CD4-positive, alpha-beta T cell (primary cell): ENCODE measurements at regions of chr11 and their contacts with region 1.

Region 1: DNA sequence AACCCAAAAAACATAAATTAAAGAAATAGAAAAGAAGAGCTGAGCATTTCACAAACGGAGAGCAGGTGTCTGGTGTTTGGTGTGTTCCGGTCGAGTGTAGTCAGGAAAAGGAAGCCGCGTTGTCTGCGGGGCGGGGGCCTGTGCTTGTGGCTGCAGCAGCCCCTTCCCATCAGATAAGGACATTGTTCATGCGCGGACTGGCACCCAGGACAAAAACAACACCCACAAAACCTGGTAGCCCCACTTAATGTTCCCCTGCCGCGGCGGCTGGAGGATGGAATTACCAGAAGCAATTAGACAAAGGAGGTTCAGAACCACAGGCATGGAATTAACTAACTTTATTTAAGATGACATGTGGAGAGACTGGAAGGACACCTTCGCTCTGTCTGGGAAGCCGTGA is 29.9 kb downstream of the KRTAP5-5 start:
- DNase-seq: peak in 1 of 14 experiments; percentile 23
- ATAC-seq: no peak
- H3K4me3 ChIP-seq: no peak overlapping the region
- H3K4me3 Mint-ChIP-seq: peak overlapping the region; percentile 4
- H3K27ac ChIP-seq: no peak overlapping the region
- H3K27ac Mint-ChIP-seq: no peak overlapping the region
- H3K4me1 ChIP-seq: peaks cover 9% of the 10 kb centered on the region
- H3K4me1 Mint-ChIP-seq: peaks cover 16% of the 10 kb centered on the region
- H3K27me3 ChIP-seq: peaks cover 0 to 8% of the 10 kb centered on the region in 2 experiments
- H3K27me3 Mint-ChIP-seq: peaks cover 18% of the 10 kb centered on the region
- CTCF ChIP-seq: no peak

Region 2: DNA sequence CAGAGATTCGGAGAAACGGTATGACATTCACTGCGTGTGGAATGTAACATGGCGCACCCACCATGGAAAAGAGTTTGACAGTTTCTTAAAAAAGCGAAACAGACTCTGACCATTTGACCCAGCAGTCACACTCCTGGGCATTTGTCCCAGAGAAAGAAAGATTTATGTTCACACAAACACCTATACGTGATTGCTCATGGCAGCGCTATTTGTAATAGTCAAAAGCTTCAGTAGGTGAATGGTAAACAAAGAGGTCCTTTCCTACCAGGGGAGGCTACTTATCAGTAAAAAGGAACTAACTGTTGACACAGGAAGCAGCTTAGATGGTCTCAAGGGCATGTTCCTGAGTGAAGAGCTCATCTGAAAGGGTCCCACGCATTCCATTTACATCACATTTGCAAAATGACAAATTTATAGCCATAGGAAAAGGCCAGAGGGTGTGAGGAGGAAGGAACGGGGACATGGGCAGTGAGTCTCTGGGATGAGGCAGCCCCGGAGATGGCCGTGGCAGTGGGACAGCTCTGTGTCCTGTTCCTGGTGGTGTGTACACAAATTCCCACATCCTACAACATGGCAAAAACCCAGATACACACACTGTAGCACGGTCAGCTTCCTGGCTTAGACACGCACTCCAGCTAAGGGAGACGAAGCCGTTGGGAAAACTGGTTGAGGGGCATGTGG is 22.9 kb after region 1 on chr11:
- CTCF ChIA-PET with region 1: no interaction called
- POLR2A ChIA-PET with region 1: no interaction called
- intact Hi-C with region 1: loop called in 1 of 2 experiments (anchors 2 kb)
- DNase-seq: no peak
- ATAC-seq: no peak
- H3K4me3 ChIP-seq: no peak overlapping the region
- H3K4me3 Mint-ChIP-seq: no peak overlapping the region
- H3K27ac ChIP-seq: no peak overlapping the region
- H3K27ac Mint-ChIP-seq: no peak overlapping the region
- H3K4me1 ChIP-seq: no peaks in the 10 kb centered on the region
- H3K4me1 Mint-ChIP-seq: no peaks in the 10 kb centered on the region
- H3K27me3 ChIP-seq: peaks cover 0 to 5% of the 10 kb centered on the region in 2 experiments
- H3K27me3 Mint-ChIP-seq: peaks cover 18% of the 10 kb centered on the region
- CTCF ChIP-seq: no peak

Region 3: DNA sequence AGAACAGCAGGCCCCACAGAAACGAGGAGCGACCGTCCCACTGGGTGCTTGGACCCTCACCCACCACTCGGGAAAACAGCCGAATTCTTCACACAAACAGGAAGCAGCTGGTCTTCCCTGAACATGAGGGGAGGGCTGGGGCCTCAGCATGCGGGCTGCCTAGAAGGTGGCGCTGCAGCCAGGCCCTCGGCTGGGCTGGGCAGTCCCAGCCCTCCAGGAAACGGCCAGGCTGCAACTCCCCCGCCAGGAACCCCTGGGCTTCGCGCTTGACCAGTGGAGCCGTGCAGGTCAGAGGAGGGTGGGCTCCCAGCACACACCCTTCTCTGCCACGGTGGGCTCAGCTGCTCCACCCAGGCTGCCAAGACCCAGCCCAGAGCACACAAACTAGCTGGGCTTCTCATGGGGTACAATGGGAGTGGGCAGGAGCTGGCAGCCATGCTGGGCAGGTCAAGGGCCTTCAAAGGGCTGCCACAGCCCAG is 450.1 kb after region 1 on chr11:
- CTCF ChIA-PET with region 1: no interaction called
- POLR2A ChIA-PET with region 1: no interaction called
- intact Hi-C with region 1: no loop called
- DNase-seq: no peak
- ATAC-seq: no peak
- H3K4me3 ChIP-seq: no peak overlapping the region
- H3K4me3 Mint-ChIP-seq: no peak overlapping the region
- H3K27ac ChIP-seq: no peak overlapping the region
- H3K27ac Mint-ChIP-seq: no peak overlapping the region
- H3K4me1 ChIP-seq: peaks cover 3% of the 10 kb centered on the region
- H3K4me1 Mint-ChIP-seq: peaks cover 4% of the 10 kb centered on the region
- H3K27me3 ChIP-seq: peaks cover 0 to 5% of the 10 kb centered on the region in 2 experiments
- H3K27me3 Mint-ChIP-seq: no peaks in the 10 kb centered on the region
- CTCF ChIP-seq: no peak